ENCODE measurements at regions of chr2 and their contacts with region 1.

Region 1: DNA sequence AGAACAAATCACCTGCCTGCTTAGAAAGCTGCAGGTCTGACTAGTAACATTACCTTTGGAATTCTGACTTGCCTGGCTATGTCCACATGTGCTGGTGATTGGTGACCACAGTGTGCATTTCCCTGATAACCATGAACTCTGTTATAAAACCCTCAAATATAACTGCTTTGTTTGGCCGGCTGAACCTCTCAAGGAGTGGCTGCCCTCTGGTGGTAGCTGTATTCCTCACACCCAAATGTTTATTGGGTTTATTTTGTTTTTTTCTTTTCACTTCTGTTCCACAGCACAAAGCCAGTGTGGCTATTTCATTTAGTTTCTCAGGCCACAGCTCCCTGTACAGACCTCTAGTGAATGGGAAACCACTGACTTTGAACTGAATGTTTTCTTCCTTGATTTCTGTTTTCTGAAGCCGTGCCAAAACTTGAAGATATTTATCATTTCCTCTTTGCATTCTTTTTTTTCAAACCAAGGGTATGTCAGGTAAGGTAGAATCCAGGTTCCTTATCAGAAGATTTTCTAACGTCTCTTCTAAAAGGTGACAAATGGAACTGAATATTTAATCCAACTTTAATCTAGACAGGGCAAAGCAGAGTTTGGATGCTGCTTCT is 549.0 kb upstream of the VRK2 start:
- DNase-seq: peak in 1 of 2 experiments; percentile 69
- H3K4me3 ChIP-seq: no peak overlapping the region
- H3K27ac ChIP-seq: no peak overlapping the region
- H3K4me1 ChIP-seq: no peaks in the 10 kb centered on the region
- H3K27me3 ChIP-seq: no peaks in the 10 kb centered on the region
- CTCF ChIP-seq: peak; percentile 40 to 81 (median 77)
- EP300 ChIP-seq: no peak
- POLR2A ChIP-seq: no peak
- RAD21 ChIP-seq: peak; percentile 88 to 91

Region 2: DNA sequence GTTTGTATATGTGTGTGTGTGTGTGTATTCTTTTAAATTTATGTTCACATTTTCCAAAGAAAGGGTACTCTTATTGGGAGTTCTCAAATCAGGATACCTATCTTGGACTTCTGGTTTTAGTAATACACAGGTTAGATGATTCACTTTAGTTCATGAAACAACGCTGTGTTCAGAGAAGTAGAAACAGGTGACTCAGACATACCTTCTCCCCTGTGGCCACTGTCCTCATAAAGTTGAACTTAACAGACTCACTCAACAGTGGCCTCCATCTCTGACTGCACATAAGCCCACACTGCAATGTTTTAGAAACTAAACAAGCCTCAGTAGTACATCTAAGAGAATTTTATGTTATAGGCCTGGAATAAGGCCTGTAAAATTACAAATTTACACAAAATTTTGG is 17.6 kb before region 1 on chr2:
- CTCF ChIA-PET with region 1: interaction called, 14 read pairs
- POLR2A ChIA-PET with region 1: no interaction called
- DNase-seq: no peak
- H3K4me3 ChIP-seq: no peak overlapping the region
- H3K27ac ChIP-seq: no peak overlapping the region
- H3K4me1 ChIP-seq: no peaks in the 10 kb centered on the region
- H3K27me3 ChIP-seq: no peaks in the 10 kb centered on the region
- CTCF ChIP-seq: no peak
- EP300 ChIP-seq: no peak
- POLR2A ChIP-seq: no peak
- RAD21 ChIP-seq: no peak

Region 3: DNA sequence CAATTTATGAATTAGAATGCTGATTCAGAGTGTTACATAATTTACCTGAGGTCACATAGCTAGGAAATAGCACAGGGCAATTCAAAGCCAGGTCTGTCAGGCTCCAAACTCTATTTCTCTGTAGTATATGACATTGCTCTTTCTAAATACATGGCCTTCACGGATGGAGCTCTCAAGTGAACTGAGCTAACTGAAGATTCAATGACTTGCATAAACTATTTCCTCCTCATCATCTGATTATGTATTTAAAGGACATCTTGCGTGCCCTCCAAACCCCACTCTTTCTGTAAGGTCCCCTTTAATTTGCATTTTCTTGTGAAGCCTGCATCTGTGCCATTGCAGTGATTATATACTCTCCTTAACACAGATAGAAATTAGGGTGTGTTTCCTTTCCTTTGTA is 11.6 kb after region 1 on chr2:
- CTCF ChIA-PET with region 1: interaction called, 11 read pairs
- POLR2A ChIA-PET with region 1: no interaction called
- DNase-seq: no peak
- H3K4me3 ChIP-seq: no peak overlapping the region
- H3K27ac ChIP-seq: no peak overlapping the region
- H3K4me1 ChIP-seq: no peaks in the 10 kb centered on the region
- H3K27me3 ChIP-seq: no peaks in the 10 kb centered on the region
- CTCF ChIP-seq: no peak
- EP300 ChIP-seq: no peak
- POLR2A ChIP-seq: no peak
- RAD21 ChIP-seq: no peak